ENCODE measurements at regions of chr22 and their contacts with region 1.

Region 1: GRCh38 chr22:19178656-19179496 is at the start of gene SLC25A1:
- DNase-seq: no peak
- H3K4me3 ChIP-seq: peak within 1 kb of the TSS; percentile 71
- CTCF ChIP-seq: no peak

Region 2: GRCh38 chr22:19066531-19067271 is 112.2 kb before region 1 on chr22:
- CTCF ChIA-PET with region 1: no interaction called
- POLR2A ChIA-PET with region 1: no interaction called
- DNase-seq: no peak
- H3K4me3 ChIP-seq: no peak overlapping the region
- CTCF ChIP-seq: no peak

Region 3: DNA sequence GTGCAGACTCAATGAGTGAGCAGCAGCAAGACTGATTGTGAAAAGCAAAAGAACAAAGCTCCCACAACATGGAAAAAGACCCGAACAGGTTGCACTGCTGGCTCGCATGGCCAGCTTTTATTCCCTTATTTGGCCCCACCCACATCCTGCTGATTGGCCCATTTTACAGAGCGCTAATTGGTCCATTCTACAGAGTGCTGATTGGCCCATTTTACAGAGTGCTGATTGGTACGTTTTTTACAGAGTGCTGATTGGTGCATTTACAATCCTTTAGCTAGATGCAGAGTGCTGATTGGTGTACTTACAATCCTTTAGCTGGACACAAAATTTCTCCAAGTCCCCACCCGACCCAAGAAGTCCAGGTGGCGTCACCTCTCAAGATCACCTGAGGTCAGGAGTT is 15.0 kb after region 1 on chr22:
- CTCF ChIA-PET with region 1: interaction called, 15 read pairs
- POLR2A ChIA-PET with region 1: no interaction called
- DNase-seq: no peak
- H3K4me3 ChIP-seq: no peak overlapping the region
- CTCF ChIP-seq: no peak

Region 4: GRCh38 chr22:19271856-19272535 is 93.1 kb after region 1 on chr22:
- CTCF ChIA-PET with region 1: no interaction called
- POLR2A ChIA-PET with region 1: no interaction called
- DNase-seq: no peak
- H3K4me3 ChIP-seq: no peak overlapping the region
- CTCF ChIP-seq: no peak

Region 5: DNA sequence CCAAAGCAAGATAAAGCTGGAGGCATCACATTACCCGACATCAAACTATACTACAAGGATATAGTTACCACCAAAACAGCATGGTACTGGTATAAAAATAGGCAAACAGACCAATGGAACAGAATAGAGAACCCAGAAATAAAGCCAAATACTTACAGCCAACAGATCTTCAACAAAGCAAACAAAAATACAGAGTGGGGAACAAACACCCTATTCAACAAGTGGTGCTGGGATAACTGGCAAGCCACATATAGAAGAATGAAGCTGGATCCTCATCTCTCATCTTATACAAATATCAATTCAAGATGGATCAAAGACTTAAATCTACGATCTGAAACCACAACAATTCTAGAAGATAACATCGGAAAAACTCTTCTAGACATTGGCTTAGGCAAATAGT is 162.6 kb after region 1 on chr22:
- CTCF ChIA-PET with region 1: no interaction called
- POLR2A ChIA-PET with region 1: no interaction called
- DNase-seq: no peak
- H3K4me3 ChIP-seq: no peak overlapping the region
- CTCF ChIP-seq: no peak

Measured in AG04449 (cell line).